Activated CD4-positive, alpha-beta T cell treated with anti-CD3 and anti-CD28 coated beads, Interleukin-2, amount 10 ng/mL, durations not matched to agents 7 days and 5 days (primary cell): ENCODE measurements at regions of chr5 and their contacts with region 1.

Region 1: GRCh38 chr5:142713121-142713706 is 27.3 kb upstream of the FGF1 start:
- DNase-seq: peak; percentile 82
- H3K4me3 Mint-ChIP-seq: peak overlapping the region; percentile 64
- H3K27ac Mint-ChIP-seq: no peak overlapping the region
- H3K4me1 Mint-ChIP-seq: peaks cover 11% of the 10 kb centered on the region
- H3K27me3 Mint-ChIP-seq: peaks cover 12% of the 10 kb centered on the region

Region 2: DNA sequence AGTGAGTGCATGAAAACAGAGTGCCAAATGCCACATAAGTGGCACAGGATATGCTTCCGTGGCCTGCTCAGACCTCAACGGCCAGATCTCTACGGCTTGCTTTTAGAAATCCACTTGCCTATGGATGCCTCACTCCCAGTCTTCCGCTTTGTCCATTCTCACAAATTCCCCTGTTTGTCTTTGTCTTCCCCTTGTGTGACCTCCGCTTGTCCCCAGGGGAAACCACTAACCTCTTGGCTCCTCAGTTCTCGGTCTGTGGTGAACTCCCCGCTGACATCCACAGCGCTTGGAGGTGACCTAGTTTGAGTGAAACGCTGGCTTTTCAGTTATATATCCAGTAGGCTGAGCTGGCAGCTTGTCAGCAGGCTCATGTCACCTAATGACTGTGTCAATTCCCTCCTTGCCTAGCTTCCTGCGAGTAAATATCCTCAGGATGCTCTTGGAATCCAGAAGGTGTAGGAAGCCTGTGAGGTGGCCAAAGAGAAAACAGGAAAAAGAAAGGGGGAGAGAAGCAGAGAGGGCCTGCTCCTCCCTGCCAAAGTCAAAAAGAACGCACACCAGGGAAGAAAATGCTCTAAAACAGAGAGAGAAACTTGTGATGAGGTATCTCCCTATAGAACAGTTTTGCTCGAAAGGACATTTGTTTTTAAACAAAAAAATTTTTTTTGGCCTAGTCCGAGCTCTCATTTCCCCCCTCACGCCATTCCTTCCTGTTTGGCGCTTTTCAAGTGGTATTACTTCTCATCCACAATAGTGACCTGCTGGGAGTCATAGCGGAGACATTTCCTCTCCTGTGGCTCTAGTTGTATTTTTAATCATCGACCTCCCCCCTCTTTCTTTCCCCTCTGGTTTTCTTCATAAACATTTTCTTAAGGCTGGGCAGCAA is 286.8 kb before region 1 on chr5:
- CTCF ChIA-PET with region 1: no interaction called
- POLR2A ChIA-PET with region 1: no interaction called
- DNase-seq: peak; percentile 45
- H3K4me3 Mint-ChIP-seq: no peak overlapping the region
- H3K27ac Mint-ChIP-seq: peak overlapping the region; percentile 76
- H3K4me1 Mint-ChIP-seq: peaks cover 45% of the 10 kb centered on the region
- H3K27me3 Mint-ChIP-seq: no peaks in the 10 kb centered on the region

Region 3: GRCh38 chr5:142700566-142700965 is 12.6 kb before region 1 on chr5:
- CTCF ChIA-PET with region 1: interaction called, 17 read pairs
- POLR2A ChIA-PET with region 1: no interaction called
- DNase-seq: no peak
- H3K4me3 Mint-ChIP-seq: no peak overlapping the region
- H3K27ac Mint-ChIP-seq: no peak overlapping the region
- H3K4me1 Mint-ChIP-seq: no peaks in the 10 kb centered on the region
- H3K27me3 Mint-ChIP-seq: peaks cover 15% of the 10 kb centered on the region

Region 4: GRCh38 chr5:142872795-142873194 is 159.6 kb after region 1 on chr5:
- CTCF ChIA-PET with region 1: interaction called, 12 read pairs
- POLR2A ChIA-PET with region 1: no interaction called
- DNase-seq: no peak
- H3K4me3 Mint-ChIP-seq: no peak overlapping the region
- H3K27ac Mint-ChIP-seq: no peak overlapping the region
- H3K4me1 Mint-ChIP-seq: no peaks in the 10 kb centered on the region
- H3K27me3 Mint-ChIP-seq: no peaks in the 10 kb centered on the region

Region 5: GRCh38 chr5:142881076-142881783 is 168.0 kb after region 1 on chr5:
- CTCF ChIA-PET with region 1: interaction called, 23 read pairs
- POLR2A ChIA-PET with region 1: no interaction called
- DNase-seq: no peak
- H3K4me3 Mint-ChIP-seq: no peak overlapping the region
- H3K27ac Mint-ChIP-seq: no peak overlapping the region
- H3K4me1 Mint-ChIP-seq: peaks cover 5% of the 10 kb centered on the region
- H3K27me3 Mint-ChIP-seq: no peaks in the 10 kb centered on the region

Region 6: DNA sequence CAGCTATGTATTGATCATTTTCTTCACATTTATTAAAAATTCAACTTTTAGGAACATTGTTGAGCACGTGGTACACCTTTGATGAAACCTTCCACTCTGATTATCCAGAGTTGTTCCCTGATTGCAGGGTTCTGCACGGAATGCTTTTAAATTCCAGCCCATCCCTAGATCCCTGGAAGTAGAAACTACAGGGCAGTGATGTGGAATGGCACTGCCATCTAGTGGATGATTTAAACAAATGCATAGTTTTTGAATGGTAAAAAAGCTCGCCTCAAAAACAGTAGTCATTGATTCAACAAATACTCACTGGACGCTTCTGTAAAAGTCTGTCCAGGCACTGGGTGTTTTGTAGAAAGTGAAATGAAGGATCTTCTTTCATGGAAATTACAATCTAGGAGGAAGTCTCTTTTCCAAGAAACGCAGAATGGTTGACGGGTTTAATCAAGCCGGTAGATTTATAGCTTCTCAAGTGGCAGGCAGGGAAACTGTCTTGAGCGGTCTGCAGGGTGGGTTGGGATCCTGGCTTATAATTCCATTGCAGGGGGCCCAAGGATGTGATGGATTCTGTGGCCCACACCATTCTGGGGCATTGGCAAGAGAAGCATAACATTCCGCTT is 175.4 kb after region 1 on chr5:
- CTCF ChIA-PET with region 1: interaction called, 23 read pairs
- POLR2A ChIA-PET with region 1: no interaction called
- DNase-seq: peak; percentile 27
- H3K4me3 Mint-ChIP-seq: no peak overlapping the region
- H3K27ac Mint-ChIP-seq: no peak overlapping the region
- H3K4me1 Mint-ChIP-seq: peaks cover 3% of the 10 kb centered on the region
- H3K27me3 Mint-ChIP-seq: no peaks in the 10 kb centered on the region